ENCODE measurements at regions of chrX and their contacts with region 1.

Region 1: GRCh38 chrX:68631336-68631735 is 16.1 kb upstream of the STARD8 start:
- DNase-seq: no peak
- ATAC-seq: no peak
- H3K4me3 ChIP-seq: no peak overlapping the region
- H3K4me3 Mint-ChIP-seq: no peak overlapping the region
- H3K27ac ChIP-seq: no peak overlapping the region
- H3K27ac Mint-ChIP-seq: no peak overlapping the region
- H3K4me1 ChIP-seq: no peaks in the 10 kb centered on the region
- H3K4me1 Mint-ChIP-seq: no peaks in the 10 kb centered on the region
- H3K27me3 ChIP-seq: no peaks in the 10 kb centered on the region
- H3K27me3 Mint-ChIP-seq: peaks cover 0 to 6% (median 0%) of the 10 kb centered on the region in 5 donors

Region 2: GRCh38 chrX:68249401-68249831 is 381.9 kb before region 1 on chrX:
- CTCF ChIA-PET with region 1: no interaction called
- POLR2A ChIA-PET with region 1: no interaction called
- intact Hi-C with region 1: no loop called
- DNase-seq: no peak
- ATAC-seq: no peak
- H3K4me3 ChIP-seq: no peak overlapping the region
- H3K4me3 Mint-ChIP-seq: no peak overlapping the region
- H3K27ac ChIP-seq: no peak overlapping the region
- H3K27ac Mint-ChIP-seq: no peak overlapping the region
- H3K4me1 ChIP-seq: no peaks in the 10 kb centered on the region
- H3K4me1 Mint-ChIP-seq: no peaks in the 10 kb centered on the region
- H3K27me3 ChIP-seq: no peaks in the 10 kb centered on the region
- H3K27me3 Mint-ChIP-seq: peaks cover 0 to 4% (median 0%) of the 10 kb centered on the region in 5 donors

Region 3: GRCh38 chrX:68571610-68572311 is 59.6 kb before region 1 on chrX:
- CTCF ChIA-PET with region 1: no interaction called
- POLR2A ChIA-PET with region 1: no interaction called
- intact Hi-C with region 1: no loop called
- DNase-seq: no peak
- ATAC-seq: peak; percentile 24
- H3K4me3 ChIP-seq: no peak overlapping the region
- H3K4me3 Mint-ChIP-seq: no peak overlapping the region
- H3K27ac ChIP-seq: no peak overlapping the region
- H3K27ac Mint-ChIP-seq: no peak overlapping the region
- H3K4me1 ChIP-seq: no peaks in the 10 kb centered on the region
- H3K4me1 Mint-ChIP-seq: peaks cover 0 to 6% (median 0%) of the 10 kb centered on the region in 7 donors
- H3K27me3 ChIP-seq: no peaks in the 10 kb centered on the region
- H3K27me3 Mint-ChIP-seq: no peaks in the 10 kb centered on the region

Region 4: GRCh38 chrX:68693481-68694434 is 62.4 kb after region 1 on chrX:
- CTCF ChIA-PET with region 1: no interaction called
- POLR2A ChIA-PET with region 1: no interaction called
- intact Hi-C with region 1: loop called in 1 of 2 experiments (anchors 2 kb)
- DNase-seq: peak in 1 of 9 donors; percentile 24
- ATAC-seq: peak; percentile 73
- H3K4me3 ChIP-seq: no peak overlapping the region
- H3K4me3 Mint-ChIP-seq: peak overlapping the region in 8 of 10 donors; percentile 23 to 84 (median 40)
- H3K27ac ChIP-seq: no peak overlapping the region
- H3K27ac Mint-ChIP-seq: peak overlapping the region in 1 of 9 donors; percentile 82
- H3K4me1 ChIP-seq: no peaks in the 10 kb centered on the region
- H3K4me1 Mint-ChIP-seq: peaks cover 0 to 31% (median 0%) of the 10 kb centered on the region in 7 donors
- H3K27me3 ChIP-seq: no peaks in the 10 kb centered on the region
- H3K27me3 Mint-ChIP-seq: peaks cover 0 to 15% (median 6%) of the 10 kb centered on the region in 5 donors

Region 5: DNA sequence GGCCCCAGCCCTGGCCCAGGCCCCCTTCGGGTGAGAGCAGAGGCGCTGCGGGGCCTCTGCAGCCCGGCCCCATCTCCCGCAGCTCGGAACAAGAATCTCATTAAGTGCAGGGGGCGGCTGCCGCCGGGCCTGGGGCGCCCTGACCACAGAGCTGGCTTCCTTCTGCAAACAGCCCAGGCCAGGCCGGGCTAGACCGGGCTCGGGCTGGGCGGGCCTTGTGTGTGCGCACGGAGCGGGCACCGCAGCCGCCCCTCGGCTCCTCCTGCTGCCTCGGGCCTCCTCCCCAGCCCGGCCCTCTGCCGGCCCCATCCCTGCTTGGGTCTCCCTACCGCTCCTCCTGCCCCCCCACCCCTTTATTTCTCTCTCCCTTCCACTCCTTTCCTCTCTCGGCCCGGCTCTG is 280.8 kb after region 1 on chrX:
- CTCF ChIA-PET with region 1: no interaction called
- POLR2A ChIA-PET with region 1: no interaction called
- intact Hi-C with region 1: no loop called
- DNase-seq: no peak
- ATAC-seq: no peak
- H3K4me3 ChIP-seq: no peak overlapping the region
- H3K4me3 Mint-ChIP-seq: no peak overlapping the region
- H3K27ac ChIP-seq: no peak overlapping the region
- H3K27ac Mint-ChIP-seq: no peak overlapping the region
- H3K4me1 ChIP-seq: no peaks in the 10 kb centered on the region
- H3K4me1 Mint-ChIP-seq: peaks cover 0 to 7% (median 0%) of the 10 kb centered on the region in 7 donors
- H3K27me3 ChIP-seq: no peaks in the 10 kb centered on the region
- H3K27me3 Mint-ChIP-seq: peaks cover 0 to 11% (median 1%) of the 10 kb centered on the region in 5 donors

Region 6: GRCh38 chrX:69262036-69262936 is 631.0 kb after region 1 on chrX:
- CTCF ChIA-PET with region 1: no interaction called
- POLR2A ChIA-PET with region 1: no interaction called
- intact Hi-C with region 1: no loop called
- DNase-seq: no peak
- ATAC-seq: no peak
- H3K4me3 ChIP-seq: no peak overlapping the region
- H3K4me3 Mint-ChIP-seq: no peak overlapping the region
- H3K27ac ChIP-seq: no peak overlapping the region
- H3K27ac Mint-ChIP-seq: no peak overlapping the region
- H3K4me1 ChIP-seq: no peaks in the 10 kb centered on the region
- H3K4me1 Mint-ChIP-seq: peaks cover 0 to 5% (median 0%) of the 10 kb centered on the region in 7 donors
- H3K27me3 ChIP-seq: no peaks in the 10 kb centered on the region
- H3K27me3 Mint-ChIP-seq: peaks cover 10 to 16% (median 11%) of the 10 kb centered on the region in 5 donors